ENCODE measurements at regions of chr9 and their contacts with region 1.

Region 1: GRCh38 chr9:4366591-4367330 is 66.9 kb upstream of the GLIS3 start:
- DNase-seq: no peak

Region 2: DNA sequence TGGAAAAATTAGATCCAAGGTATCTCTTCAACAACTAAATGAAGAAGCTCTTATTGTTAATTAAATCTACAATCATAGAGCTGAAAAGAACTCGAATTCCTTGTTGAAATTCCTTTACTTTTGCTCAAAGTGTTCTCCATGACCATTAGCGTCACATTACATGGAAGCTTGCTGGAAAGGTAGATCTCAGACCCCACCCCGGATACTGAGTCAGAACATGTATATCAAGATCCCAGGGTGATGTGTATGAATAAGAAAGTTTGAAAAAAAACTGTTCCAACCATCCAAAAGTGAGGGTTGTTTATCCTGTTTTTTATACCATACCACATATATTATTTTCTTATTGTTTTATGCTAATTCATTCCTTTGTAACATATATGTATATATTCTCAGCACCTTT is 1285.8 kb before region 1 on chr9:
- intact Hi-C with region 1: no loop called
- DNase-seq: no peak

Region 3: DNA sequence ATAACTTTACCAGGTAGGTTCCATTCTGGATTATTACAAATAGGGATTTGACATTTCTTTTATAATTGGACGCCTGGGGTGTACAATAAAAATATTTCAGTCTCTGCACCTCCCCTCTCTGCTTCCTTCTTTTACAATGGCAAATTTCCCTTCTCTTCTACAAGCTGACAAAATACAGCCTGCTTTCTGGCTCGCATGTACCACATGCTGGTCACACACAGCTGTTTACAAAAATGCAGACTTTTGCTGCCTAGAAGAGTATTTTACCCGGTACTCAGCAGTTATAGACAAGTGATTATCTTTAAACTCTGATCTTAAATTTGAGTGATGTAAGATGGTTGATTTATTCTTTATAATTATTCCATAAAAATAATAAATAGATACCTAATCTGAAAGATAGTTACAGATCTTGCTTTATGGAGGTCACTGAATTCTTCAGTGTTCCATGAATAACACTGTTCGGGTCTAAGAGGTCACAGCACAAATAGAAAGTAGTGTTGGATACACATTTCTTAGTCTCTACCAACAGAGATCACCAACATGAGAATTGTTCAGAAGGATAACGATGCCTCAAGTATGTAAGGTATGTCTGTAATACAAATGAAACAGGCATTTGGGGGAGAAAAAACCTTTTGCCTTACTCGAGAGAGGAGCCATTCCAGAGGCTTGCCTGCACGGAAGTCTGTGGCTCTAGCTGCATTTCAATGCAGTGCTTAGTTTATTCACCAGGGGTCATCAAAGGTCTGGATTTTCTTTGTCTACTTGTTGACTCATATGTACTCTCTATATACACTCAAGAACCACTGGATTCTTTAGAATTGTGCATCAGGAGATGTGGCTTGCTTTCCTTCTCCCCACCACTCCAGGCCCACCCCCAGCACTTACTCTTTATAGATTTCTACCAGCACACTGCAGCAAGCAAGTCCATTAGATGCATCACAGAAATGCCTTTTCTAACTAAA is 634.4 kb before region 1 on chr9:
- intact Hi-C with region 1: loop called in 1 of 2 experiments (anchors 10 kb)
- DNase-seq: no peak

Region 4: DNA sequence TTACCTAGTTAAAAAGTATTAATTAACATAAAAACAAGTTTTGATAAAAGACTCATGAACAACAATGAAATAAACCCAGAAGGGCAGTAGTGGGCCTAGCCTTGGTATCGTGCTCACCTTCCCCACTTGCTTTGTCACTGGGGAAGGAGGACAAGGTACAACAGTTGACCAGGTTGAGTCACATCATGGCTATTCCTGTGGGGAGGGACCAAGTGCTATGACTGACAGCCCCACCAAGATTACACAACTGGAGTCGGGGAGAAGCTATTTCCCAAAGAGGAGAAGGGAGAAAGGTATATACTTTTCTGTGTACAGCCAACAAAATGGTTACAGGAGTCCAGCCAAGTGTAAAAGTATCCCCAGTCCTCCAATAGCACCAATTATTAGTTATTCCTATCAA is 589.6 kb before region 1 on chr9:
- intact Hi-C with region 1: no loop called
- DNase-seq: no peak

Region 5: DNA sequence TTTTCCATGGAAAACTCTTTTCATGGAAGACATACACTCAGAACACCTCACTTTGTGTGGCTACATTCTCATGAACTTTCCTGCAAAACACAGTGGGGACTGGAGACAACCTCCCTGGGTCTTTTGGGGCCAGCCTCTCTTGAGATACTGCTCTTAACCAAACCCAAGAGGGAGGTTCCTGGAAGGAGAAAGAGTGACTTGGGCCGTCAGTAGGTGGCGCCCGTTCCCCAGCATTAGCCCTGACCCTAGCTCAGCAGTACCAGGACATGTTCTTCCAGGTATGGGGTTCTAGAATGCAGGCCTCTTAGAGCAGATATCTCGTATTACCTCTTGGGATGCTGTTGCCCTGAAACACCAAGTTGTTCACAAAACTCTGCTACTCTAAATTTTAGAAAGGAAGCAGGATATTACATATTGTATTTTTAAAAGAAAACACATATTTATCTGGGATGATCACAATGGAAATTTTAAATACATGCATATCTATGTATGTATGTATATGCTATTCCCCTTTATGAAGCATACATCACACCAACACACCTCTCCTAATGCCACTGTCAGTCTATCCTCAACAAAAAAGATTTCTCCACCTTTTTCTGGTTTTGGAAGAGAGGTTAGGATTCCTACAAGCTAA is 51.1 kb before region 1 on chr9:
- intact Hi-C with region 1: loop called (anchors 2 to 10 kb)
- DNase-seq: peak; percentile 93

Region 6: DNA sequence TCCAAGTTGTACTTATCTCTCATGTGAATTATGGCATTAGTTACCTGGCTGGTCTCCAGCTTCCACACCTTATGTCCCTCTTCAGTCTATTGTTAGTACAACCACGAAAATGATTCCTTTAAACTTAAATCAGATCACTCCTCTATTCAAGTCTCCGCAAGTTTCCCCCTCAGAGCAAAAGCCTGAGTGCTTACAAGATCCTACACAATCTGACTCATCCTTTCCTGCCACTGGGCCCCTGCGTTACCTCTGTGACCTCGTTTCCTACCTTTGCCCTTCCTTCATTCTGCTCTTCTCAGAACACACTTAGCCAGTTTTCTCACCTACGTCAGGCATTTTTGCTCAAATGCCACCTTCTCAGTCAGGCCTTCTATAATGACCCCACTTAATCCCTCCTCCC is 21.8 kb before region 1 on chr9:
- intact Hi-C with region 1: loop called in 1 of 2 experiments (anchors 1 kb)
- DNase-seq: no peak

Measured in posterior vena cava (tissue), 2 donors.